ENCODE measurements at regions of chr5 and their contacts with region 1.

Region 1: DNA sequence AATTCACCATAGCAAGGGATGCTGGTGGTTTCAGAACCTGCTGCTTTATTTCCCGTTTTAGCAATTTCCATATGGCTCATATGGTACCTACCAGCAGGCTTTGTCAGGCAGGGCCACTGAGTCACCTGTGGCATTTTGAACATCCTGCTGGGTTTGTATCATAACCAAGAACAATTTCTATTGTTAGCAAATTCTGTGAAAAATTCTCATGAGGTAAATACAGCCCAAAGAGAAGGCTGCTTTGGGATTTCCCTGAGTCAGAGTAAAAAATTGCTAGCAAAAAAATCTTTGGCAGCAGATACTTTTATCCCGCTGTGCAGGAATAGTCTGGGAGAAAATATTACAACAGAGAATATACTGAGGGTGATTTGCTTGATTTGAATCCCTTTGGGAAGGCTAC is 52.7 kb downstream of the PRR16 start:
- DNase-seq: peak; percentile 63
- ATAC-seq: peak; percentile 60; the same call in 1 of the 2 replicates
- H3K4me3 ChIP-seq: no peak overlapping the region
- H3K27ac ChIP-seq: peak overlapping the region; percentile 1; the same call in 1 of the 2 replicates
- H3K4me1 ChIP-seq: peaks cover 5% of the 10 kb centered on the region
- H3K27me3 ChIP-seq: no peaks in the 10 kb centered on the region
- CTCF ChIP-seq: no peak
- POLR2A ChIP-seq: no peak
- RAD21 ChIP-seq: no peak

Region 2: DNA sequence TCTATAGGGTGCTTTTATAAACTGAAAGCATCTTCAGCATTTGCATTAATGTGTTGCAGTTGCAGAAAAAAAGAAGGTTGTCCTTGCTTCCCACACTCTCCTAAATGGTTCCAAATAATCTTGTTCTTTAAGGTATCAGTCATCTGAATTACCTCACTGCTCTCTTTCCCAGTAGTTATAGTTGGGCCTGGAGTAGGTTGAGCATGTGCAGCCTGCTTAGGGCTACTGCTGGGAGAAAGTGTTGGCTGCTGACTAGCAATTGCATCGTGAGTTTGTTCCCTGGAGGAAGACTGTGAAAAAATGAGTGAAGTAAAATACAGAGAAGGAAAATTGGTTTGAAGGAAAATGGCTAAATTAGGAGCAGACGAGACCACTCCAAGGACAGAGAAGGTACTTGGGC is 21.8 kb after region 1 on chr5:
- CTCF ChIA-PET with region 1: no interaction called
- POLR2A ChIA-PET with region 1: no interaction called
- dilution Hi-C with region 1: no loop called
- in situ Hi-C with region 1: no loop called
- intact Hi-C with region 1: no loop called
- DNase-seq: peak; percentile 80
- ATAC-seq: peak; percentile 76
- H3K4me3 ChIP-seq: no peak overlapping the region
- H3K27ac ChIP-seq: peak overlapping the region; percentile 36
- H3K4me1 ChIP-seq: peaks cover 6% of the 10 kb centered on the region
- H3K27me3 ChIP-seq: no peaks in the 10 kb centered on the region
- CTCF ChIP-seq: no peak
- POLR2A ChIP-seq: no peak
- RAD21 ChIP-seq: no peak

Region 3: GRCh38 chr5:120604888-120605287 is 88.1 kb after region 1 on chr5:
- CTCF ChIA-PET with region 1: no interaction called
- POLR2A ChIA-PET with region 1: no interaction called
- dilution Hi-C with region 1: no loop called
- in situ Hi-C with region 1: no loop called
- intact Hi-C with region 1: no loop called
- DNase-seq: peak; percentile 94
- ATAC-seq: peak; percentile 94
- H3K4me3 ChIP-seq: no peak overlapping the region
- H3K27ac ChIP-seq: peak overlapping the region; percentile 48; the same call in 1 of the 2 replicates
- H3K4me1 ChIP-seq: peaks cover 16% of the 10 kb centered on the region
- H3K27me3 ChIP-seq: no peaks in the 10 kb centered on the region
- CTCF ChIP-seq: no peak
- POLR2A ChIP-seq: no peak
- RAD21 ChIP-seq: no peak

Region 4: GRCh38 chr5:120678279-120678678 is 161.5 kb after region 1 on chr5:
- CTCF ChIA-PET with region 1: no interaction called
- POLR2A ChIA-PET with region 1: no interaction called
- dilution Hi-C with region 1: no loop called
- in situ Hi-C with region 1: no loop called
- intact Hi-C with region 1: loop called (anchors 10 kb)
- DNase-seq: peak; percentile 74
- ATAC-seq: peak; percentile 71
- H3K4me3 ChIP-seq: no peak overlapping the region
- H3K27ac ChIP-seq: no peak overlapping the region
- H3K4me1 ChIP-seq: peaks cover 9% of the 10 kb centered on the region; the same call in 1 of the 2 replicates
- H3K27me3 ChIP-seq: no peaks in the 10 kb centered on the region
- CTCF ChIP-seq: no peak
- POLR2A ChIP-seq: no peak
- RAD21 ChIP-seq: no peak

Region 5: DNA sequence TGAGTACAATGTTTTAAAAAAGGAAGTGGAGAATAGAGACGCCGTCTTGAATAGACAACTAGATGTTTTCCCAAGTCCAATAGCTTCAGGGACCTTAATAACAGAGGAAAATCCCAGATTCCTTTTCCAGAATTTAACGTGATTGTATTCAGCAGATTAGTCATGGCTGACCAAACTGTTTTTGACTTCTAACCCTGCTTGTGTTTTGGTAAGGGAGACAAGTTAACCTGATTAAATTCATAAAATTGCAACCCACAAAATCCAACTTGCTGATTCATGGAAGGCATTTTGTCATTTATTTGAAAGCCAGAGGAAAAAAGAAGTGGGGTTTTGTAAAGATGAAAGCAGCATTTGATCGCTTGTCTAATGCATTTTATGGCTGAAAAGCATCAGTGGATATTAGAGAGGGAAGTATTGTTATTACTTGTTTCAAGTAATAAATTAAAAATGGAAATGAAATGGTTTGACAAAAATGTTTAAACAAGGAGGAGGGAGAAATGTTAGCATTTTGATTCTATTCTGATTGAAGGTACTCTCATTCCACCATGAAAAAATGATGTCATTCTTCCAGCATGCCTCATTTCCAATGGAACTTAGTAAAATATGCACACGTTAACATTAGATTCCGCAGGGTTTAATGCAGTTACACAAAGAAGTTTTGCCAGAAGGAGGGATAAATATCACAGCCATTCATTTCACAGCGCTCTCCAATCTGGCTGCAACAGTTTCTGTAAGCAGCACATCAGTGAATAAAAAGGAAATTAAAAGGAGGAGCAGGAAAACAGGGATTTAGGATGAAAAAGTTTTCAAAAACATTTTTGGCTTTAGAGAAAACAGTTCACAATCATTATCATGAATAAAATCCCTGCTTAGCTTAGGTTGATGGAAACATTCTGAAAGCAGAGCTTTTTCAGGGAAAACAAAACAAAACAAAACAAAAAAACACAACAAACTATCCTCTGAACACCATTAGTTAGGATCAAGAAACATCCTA is 262.0 kb after region 1 on chr5:
- CTCF ChIA-PET with region 1: no interaction called
- POLR2A ChIA-PET with region 1: no interaction called
- dilution Hi-C with region 1: no loop called
- in situ Hi-C with region 1: no loop called
- intact Hi-C with region 1: no loop called
- DNase-seq: peak; percentile 87
- ATAC-seq: peak; percentile 88
- H3K4me3 ChIP-seq: peak overlapping the region; percentile 19; the same call in 1 of the 2 replicates
- H3K27ac ChIP-seq: peak overlapping the region; percentile 37; the same call in 1 of the 2 replicates
- H3K4me1 ChIP-seq: 0 out of 2 replicates have a peak, but pooled peaks cover 2% of the 10 kb centered on the region
- H3K27me3 ChIP-seq: no peaks in the 10 kb centered on the region
- CTCF ChIP-seq: no peak
- POLR2A ChIP-seq: no peak; the same call in 1 of the 2 replicates
- RAD21 ChIP-seq: no peak